ENCODE measurements at regions of chr15 and their contacts with region 1.

Region 1: GRCh38 chr15:66851226-66852071 is 149.4 kb downstream of the SMAD6 start:
- DNase-seq: peak; percentile 83
- ATAC-seq: peak; percentile 97
- H3K4me3 Mint-ChIP-seq: no peak overlapping the region
- H3K27ac Mint-ChIP-seq: no peak overlapping the region
- H3K4me1 Mint-ChIP-seq: peaks cover 10% of the 10 kb centered on the region
- H3K27me3 Mint-ChIP-seq: peaks cover 12% of the 10 kb centered on the region

Region 2: GRCh38 chr15:66619151-66619903 is 232.1 kb before region 1 on chr15:
- CTCF ChIA-PET with region 1: interaction called, 40 read pairs
- POLR2A ChIA-PET with region 1: no interaction called
- DNase-seq: peak; percentile 63
- ATAC-seq: peak; percentile 64
- H3K4me3 Mint-ChIP-seq: no peak overlapping the region
- H3K27ac Mint-ChIP-seq: no peak overlapping the region
- H3K4me1 Mint-ChIP-seq: peaks cover 30% of the 10 kb centered on the region
- H3K27me3 Mint-ChIP-seq: peaks cover 22% of the 10 kb centered on the region

Region 3: DNA sequence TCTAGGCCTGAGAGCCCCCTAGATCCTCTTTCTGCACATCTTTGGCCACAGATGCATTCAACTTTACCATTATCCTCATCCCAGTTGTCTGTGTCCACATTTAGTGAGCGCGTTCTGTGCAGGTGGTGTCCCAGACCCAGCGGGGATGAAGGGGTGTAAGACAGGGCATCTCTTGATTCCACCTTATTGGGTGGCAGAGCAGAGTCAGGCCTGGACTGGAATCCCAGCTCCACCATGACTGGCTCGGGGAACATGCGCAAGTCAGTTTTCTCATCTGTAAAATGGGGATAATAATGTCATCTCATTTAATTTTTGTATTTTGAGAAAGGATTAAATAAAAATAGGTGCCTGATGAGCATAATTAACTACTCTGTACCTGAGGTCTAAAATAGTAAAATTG is 141.6 kb before region 1 on chr15:
- CTCF ChIA-PET with region 1: interaction called, 13 read pairs
- POLR2A ChIA-PET with region 1: no interaction called
- DNase-seq: no peak
- ATAC-seq: no peak
- H3K4me3 Mint-ChIP-seq: no peak overlapping the region
- H3K27ac Mint-ChIP-seq: no peak overlapping the region
- H3K4me1 Mint-ChIP-seq: peaks cover 4% of the 10 kb centered on the region
- H3K27me3 Mint-ChIP-seq: peaks cover 11% of the 10 kb centered on the region

Region 4: GRCh38 chr15:66824424-66824823 is 27.0 kb before region 1 on chr15:
- CTCF ChIA-PET with region 1: interaction called, 11 read pairs
- POLR2A ChIA-PET with region 1: no interaction called
- DNase-seq: no peak
- ATAC-seq: no peak
- H3K4me3 Mint-ChIP-seq: no peak overlapping the region
- H3K27ac Mint-ChIP-seq: no peak overlapping the region
- H3K4me1 Mint-ChIP-seq: no peaks in the 10 kb centered on the region
- H3K27me3 Mint-ChIP-seq: no peaks in the 10 kb centered on the region

Region 5: GRCh38 chr15:66862878-66863335 is 11.5 kb after region 1 on chr15:
- CTCF ChIA-PET with region 1: interaction called, 17 read pairs
- POLR2A ChIA-PET with region 1: no interaction called
- DNase-seq: peak; percentile 84
- ATAC-seq: peak; percentile 87
- H3K4me3 Mint-ChIP-seq: no peak overlapping the region
- H3K27ac Mint-ChIP-seq: no peak overlapping the region
- H3K4me1 Mint-ChIP-seq: peaks cover 12% of the 10 kb centered on the region
- H3K27me3 Mint-ChIP-seq: peaks cover 21% of the 10 kb centered on the region

Region 6: DNA sequence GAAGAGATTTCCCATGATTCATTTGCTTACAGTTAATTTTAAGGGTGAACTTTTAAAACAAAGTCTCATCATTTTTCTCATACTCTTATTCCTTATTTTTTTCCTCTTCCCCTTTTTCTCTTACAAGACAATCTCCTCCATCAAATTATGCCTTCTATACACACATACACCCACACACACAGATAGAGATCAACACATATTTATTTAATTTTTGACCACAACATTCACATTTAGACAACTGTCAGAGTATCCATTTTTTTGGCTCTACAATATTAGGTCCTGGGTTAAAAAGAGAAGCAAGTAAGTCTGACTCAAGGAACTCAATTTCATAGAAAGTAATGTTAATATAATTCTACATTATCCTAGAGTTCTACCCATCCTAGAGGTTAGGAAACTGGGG is 365.4 kb after region 1 on chr15:
- CTCF ChIA-PET with region 1: no interaction called
- POLR2A ChIA-PET with region 1: no interaction called
- DNase-seq: no peak
- ATAC-seq: no peak
- H3K4me3 Mint-ChIP-seq: no peak overlapping the region
- H3K27ac Mint-ChIP-seq: no peak overlapping the region
- H3K4me1 Mint-ChIP-seq: no peaks in the 10 kb centered on the region
- H3K27me3 Mint-ChIP-seq: no peaks in the 10 kb centered on the region